ENCODE measurements at regions of chr14 and their contacts with region 1.

Region 1: DNA sequence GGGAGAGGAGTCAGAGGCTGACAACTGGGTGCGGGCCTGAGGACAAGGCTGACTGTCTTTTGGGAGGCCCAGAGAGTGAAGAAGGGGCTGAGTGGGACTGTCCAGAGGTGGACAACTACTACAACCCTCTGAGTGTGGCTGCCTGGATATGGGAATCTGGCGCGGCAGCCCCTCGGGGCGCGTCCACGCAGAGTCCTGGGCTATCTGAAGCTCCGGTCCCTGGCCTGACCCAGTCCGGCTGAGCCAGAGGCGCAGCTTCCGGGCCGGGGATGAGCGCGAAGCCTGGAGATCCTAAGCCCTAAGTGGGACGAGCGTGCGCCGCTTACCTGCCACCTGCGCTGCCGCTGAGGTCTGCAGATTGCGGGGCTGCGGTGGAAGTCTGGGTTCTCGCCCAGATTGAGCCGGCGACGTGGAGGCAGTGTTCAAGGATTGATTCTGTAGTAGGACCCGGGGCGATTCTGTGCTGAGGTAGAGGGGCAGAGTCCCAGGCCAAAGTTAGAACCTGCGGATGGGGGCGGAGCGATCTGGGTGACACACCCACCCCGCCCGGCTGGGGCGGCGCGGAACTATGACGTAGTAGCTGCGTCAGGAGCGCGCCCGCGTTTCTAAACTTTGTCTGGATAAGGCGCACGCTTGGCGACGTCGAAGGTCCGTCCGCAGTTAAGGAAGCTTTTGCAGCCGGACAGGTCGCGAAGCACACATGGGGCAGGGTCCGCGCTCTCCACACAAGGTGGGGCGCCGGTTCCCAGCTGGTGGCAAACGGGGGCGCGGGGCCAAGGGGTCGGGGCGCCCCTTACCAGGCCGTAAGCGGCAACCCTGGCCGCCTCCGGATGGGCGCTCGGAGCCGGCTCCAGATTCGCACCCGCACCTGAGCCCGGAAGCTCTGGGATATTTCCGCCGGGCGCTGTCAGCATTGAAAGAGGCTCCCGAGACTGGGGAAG is at the starts of genes DHRS1 and NOP9:
- DNase-seq: peak; percentile 94 to 97 (median 96)
- ATAC-seq: peak; percentile 96
- H3K4me3 ChIP-seq: peak within 1 kb of the TSS; percentile 61
- H3K4me1 ChIP-seq: peaks cover 26% of the 10 kb centered on the region
- CTCF ChIP-seq: no peak
- total RNA-seq, gene DHRS1: 30.6 to 56.9 (median 54.9) TPM
- total RNA-seq, gene NOP9: 24.1 to 29.2 (median 29.1) TPM

Region 2: GRCh38 chr14:24241829-24242443 is 57.6 kb before region 1 on chr14:
- intact Hi-C with region 1: loop called in 1 of 2 experiments (anchors 5 kb)
- DNase-seq: peak; percentile 93 to 96 (median 94)
- ATAC-seq: peak; percentile 93
- H3K4me3 ChIP-seq: peak overlapping the region; percentile 35
- H3K4me1 ChIP-seq: peaks cover 26% of the 10 kb centered on the region
- CTCF ChIP-seq: peak; percentile 56

Measured in mucosa of descending colon (tissue), 3 donors.